Activated CD8-positive, alpha-beta T cell treated with anti-CD3 and anti-CD28 coated beads for 36 hours (primary cell): ENCODE measurements at regions of chr6 and their contacts with region 1.

Region 1: GRCh38 chr6:36423101-36423824 is 19.4 kb downstream of the PXT1 start:
- DNase-seq: peak; percentile 99
- ATAC-seq: peak; percentile 96
- H3K4me3 Mint-ChIP-seq: peak overlapping the region; percentile 77
- H3K27ac Mint-ChIP-seq: peak overlapping the region; percentile 89
- H3K4me1 Mint-ChIP-seq: peaks cover 11% of the 10 kb centered on the region
- H3K27me3 Mint-ChIP-seq: no peaks in the 10 kb centered on the region
- CTCF ChIP-seq: peak; percentile 67

Region 2: GRCh38 chr6:36442671-36443470 is 19.6 kb after region 1 on chr6 and contains the starts of genes KCTD20 and PXT1:
- CTCF ChIA-PET with region 1: interaction called, 11 read pairs
- POLR2A ChIA-PET with region 1: interaction called, 6 read pairs
- intact Hi-C with region 1: no loop called
- DNase-seq: peak; percentile 94
- ATAC-seq: peak; percentile 83
- H3K4me3 Mint-ChIP-seq: peak within 1 kb of the TSS; percentile 97
- H3K27ac Mint-ChIP-seq: peak within 1 kb of the TSS; percentile 98
- H3K4me1 Mint-ChIP-seq: peaks cover 40% of the 10 kb centered on the region
- H3K27me3 Mint-ChIP-seq: no peaks in the 10 kb centered on the region
- CTCF ChIP-seq: no peak
- total RNA-seq, gene KCTD20: 42.7 to 45.1 TPM
- total RNA-seq, gene PXT1: 0.22 to 0.36 TPM